Cardiac septum (tissue), 1 donor: ENCODE measurements at regions of chr3 and their contacts with region 1.

Region 1: DNA sequence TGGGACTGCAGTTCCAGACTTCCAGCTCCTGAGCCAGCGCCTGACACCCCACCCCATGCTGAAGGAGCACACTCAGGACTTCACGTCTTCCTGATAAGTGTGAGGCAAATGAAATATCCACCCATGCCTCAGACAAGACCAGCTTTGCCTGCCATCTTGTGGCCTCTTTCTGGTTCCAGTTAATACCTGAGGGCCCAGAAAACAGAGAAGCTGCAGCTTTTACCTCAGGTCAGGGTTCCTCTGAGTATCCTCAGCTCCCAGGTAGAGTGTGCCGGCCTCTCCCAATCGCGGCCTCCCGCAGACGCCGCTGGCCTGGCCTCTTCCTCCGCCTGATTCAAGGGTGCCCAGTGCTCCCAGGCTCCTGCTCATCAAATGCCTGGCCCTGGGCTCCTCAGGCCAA is 5.1 kb upstream of the KLHL6 start:
- DNase-seq: peak; percentile 70

Region 2: DNA sequence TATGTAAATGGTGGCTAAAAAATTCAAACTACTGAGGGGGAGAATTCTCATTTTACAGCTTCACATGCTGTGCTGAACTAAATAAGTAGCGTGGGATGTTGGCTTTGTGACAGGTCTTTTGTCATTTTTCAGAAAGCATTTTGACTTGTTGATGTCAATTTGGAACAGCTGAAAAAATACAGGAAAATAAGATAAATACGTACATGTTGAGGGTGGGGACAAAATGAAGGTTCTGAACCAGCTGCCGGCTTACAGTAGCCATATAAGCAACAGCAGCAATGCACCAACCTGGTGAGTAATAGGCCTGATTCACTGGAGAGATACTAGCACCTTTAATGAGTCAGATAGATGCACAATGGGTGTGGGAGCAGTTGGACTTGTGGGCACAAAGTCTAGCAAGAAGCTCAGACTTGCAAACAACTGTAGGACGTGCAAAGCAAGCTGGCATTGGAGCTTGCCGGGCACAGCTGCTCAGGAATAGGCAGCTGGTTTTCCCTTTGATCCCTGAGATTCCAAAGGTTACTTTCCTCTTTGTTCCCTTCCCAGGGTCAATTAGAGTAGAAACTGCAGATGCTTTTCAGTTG is 294.7 kb before region 1 on chr3:
- intact Hi-C with region 1: no loop called
- DNase-seq: no peak

Region 3: GRCh38 chr3:183468424-183468823 is 92.2 kb before region 1 on chr3:
- intact Hi-C with region 1: loop called (anchors 5 kb)
- DNase-seq: no peak